GM12878 (cell line): ENCODE measurements at regions of chr5 and their contacts with region 1.

Region 1: DNA sequence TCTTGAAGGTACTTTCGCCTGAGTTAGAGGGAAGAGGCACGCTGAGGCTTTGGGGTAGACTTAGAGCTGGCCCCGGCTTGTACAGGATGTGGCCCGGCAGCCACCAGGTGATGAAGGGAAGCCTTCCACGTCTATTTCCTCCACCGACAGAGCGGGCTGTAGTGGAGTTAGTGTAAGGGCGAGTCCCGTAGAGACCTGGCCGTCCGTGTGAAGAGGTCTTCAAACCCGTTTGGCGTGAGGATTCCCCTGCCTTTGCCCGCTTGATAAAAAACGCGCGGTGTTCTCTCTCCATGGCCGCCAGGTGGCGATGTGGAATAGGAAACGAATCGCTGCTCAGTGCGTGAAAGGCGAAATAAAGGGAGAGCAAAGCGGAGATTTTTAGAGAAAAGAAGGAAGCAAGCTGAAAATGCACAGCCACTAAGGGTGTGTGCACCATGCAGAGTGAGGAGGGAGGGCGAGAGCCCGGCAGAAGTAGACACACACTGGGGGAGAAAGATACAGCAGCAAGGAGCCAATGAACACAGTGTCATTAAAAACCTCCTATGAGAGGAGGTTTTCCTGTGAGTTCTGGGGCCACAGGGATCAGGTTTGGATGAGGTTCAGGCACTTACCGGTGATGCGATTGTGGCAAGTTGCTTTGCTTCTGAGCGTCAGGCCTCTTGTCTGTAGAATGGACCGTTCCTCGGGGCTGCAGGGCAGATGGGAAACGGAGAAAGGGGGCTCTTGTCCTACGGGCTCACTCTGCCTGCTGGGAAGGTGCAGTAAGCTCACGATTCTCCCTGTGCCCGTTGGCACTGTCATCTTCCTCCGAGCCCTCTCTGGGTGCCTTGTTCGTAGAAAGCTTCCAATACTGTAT is 34.2 kb downstream of the STC2 start:
- DNase-seq: peak; percentile 35
- ATAC-seq: peak; percentile 88
- H3K4me3 ChIP-seq: peak overlapping the region; percentile 28; the same call in 1 of the 2 replicates
- H3K27ac ChIP-seq: 0 out of 2 replicates have a peak overlapping the region, but pooled peaks have one; percentile 41
- H3K4me1 ChIP-seq: peaks cover 26% of the 10 kb centered on the region
- H3K27me3 ChIP-seq: peaks cover 0 to 2% of the 10 kb centered on the region in 2 experiments; a peak in 2 of 4 replicates
- CTCF ChIP-seq: peak; percentile 78 to 92 (median 86)
- EP300 ChIP-seq: no peak
- POLR2A ChIP-seq: no peak
- RAD21 ChIP-seq: peak; percentile 89

Region 2: DNA sequence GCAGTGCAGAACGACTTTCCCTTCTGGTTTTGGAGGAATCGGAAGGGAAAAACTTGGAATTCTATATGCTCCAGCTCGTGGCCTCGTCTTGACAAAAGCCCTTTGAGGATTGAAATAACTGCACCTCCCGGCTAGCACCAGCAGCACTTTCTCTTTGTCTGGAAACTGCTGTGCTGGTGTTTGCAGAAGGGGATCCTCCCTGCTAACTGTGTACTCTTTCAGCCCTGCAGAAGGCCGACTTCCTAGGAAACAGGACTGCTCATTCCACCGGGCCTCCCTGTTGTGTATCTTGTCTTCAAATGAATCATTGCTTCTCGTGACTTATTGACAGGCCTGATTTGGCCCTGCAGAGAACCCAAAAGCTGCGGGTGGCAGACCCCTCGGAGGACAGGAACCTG is 10.5 kb after region 1 on chr5:
- CTCF ChIA-PET with region 1: interaction called, 12 read pairs
- POLR2A ChIA-PET with region 1: no interaction called
- RAD21 ChIA-PET with region 1: no interaction called
- SMC1A ChIA-PET with region 1: interaction called, 4 read pairs
- in situ Hi-C with region 1: no loop called
- intact Hi-C with region 1: no loop called
- DNase-seq: no peak
- ATAC-seq: no peak
- H3K4me3 ChIP-seq: no peak overlapping the region
- H3K27ac ChIP-seq: no peak overlapping the region
- H3K4me1 ChIP-seq: no peaks in the 10 kb centered on the region
- H3K27me3 ChIP-seq: no peaks in the 10 kb centered on the region; a peak in 3 of 4 replicates
- CTCF ChIP-seq: no peak
- EP300 ChIP-seq: no peak
- POLR2A ChIP-seq: no peak
- RAD21 ChIP-seq: no peak

Region 3: GRCh38 chr5:173331956-173332479 is 38.0 kb after region 1 on chr5:
- CTCF ChIA-PET with region 1: interaction called, 79 read pairs
- POLR2A ChIA-PET with region 1: interaction called, 3 read pairs
- RAD21 ChIA-PET with region 1: interaction called, 22 read pairs
- SMC1A ChIA-PET with region 1: interaction called, 29 read pairs
- in situ Hi-C with region 1: loop called (anchors 5 kb)
- intact Hi-C with region 1: loop called (anchors 1 kb)
- DNase-seq: peak; percentile 42
- ATAC-seq: peak; percentile 98
- H3K4me3 ChIP-seq: no peak overlapping the region
- H3K27ac ChIP-seq: no peak overlapping the region
- H3K4me1 ChIP-seq: no peaks in the 10 kb centered on the region; the same call in 1 of the 2 replicates
- H3K27me3 ChIP-seq: peaks cover 0 to 2% of the 10 kb centered on the region in 2 experiments; a peak in 2 of 4 replicates
- CTCF ChIP-seq: peak; percentile 88 to 94 (median 92)
- EP300 ChIP-seq: no peak
- POLR2A ChIP-seq: no peak
- RAD21 ChIP-seq: peak; percentile 88

Region 4: DNA sequence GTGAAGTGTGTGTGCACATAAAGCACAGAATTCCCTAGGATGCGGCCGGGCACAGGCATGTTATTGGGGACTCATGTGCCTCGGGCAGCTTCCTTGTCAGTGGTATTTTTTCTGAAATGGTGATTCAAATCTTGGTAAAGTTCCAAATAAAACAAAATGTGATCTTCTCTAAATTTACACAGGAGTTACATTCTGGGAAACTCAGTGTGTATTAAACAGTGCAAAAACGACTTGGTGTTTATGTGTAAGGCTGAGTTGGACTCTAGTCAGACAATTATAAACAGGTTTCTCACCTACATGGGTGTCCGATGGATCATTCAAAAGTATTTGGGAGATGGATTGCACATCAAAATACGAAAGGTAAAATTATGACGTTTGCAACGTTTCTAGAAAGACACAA is 273.5 kb after region 1 on chr5:
- CTCF ChIA-PET with region 1: interaction called, 16 read pairs
- POLR2A ChIA-PET with region 1: no interaction called
- RAD21 ChIA-PET with region 1: interaction called, 6 read pairs
- SMC1A ChIA-PET with region 1: interaction called, 3 read pairs
- in situ Hi-C with region 1: loop called (anchors 5 kb)
- intact Hi-C with region 1: no loop called
- DNase-seq: no peak
- ATAC-seq: no peak
- H3K4me3 ChIP-seq: no peak overlapping the region
- H3K27ac ChIP-seq: no peak overlapping the region
- H3K4me1 ChIP-seq: no peaks in the 10 kb centered on the region
- H3K27me3 ChIP-seq: peaks cover 0 to 2% of the 10 kb centered on the region in 2 experiments; a peak in 1 of 4 replicates
- CTCF ChIP-seq: no peak
- EP300 ChIP-seq: no peak
- POLR2A ChIP-seq: no peak
- RAD21 ChIP-seq: no peak

Region 5: DNA sequence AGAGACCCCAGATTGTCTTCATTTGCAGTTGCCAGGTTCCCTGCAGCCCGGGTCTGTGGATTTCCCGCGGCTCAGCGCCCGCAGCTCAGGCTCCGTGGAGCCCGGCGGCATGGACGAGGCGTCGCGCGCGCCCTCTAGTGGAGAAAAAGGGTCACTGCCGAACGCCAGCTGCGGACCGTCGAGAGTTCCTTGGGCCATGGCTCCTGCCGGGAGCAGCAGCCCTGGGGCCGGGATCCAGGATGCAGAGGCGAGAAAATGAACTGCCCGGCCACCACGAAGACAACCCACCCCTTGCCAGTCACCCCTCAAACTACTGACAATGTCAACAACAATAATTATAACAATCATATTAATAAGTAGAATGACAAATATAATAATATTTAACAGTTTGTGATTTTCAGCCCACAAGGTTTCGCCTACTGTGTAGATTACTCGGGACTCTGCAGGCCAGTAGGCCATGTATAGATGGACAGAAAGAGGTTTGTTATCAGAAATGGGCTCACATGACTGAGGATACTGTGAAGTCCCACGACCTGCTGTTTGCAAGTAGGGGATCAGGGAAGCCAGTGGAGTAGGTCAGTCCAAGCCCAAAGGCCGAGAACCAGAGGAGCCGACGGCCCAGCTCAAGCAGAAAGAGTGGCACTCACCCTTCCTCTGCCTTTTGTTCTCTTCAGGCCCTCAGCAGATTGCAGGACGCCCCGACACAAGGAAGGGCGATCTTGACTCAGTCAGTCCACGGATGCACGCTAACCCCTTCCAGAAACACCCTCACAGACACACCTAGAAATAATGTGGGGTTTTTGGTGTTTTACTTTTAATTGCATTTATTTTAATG is 279.3 kb after region 1 on chr5:
- CTCF ChIA-PET with region 1: interaction called, 16 read pairs
- POLR2A ChIA-PET with region 1: no interaction called
- RAD21 ChIA-PET with region 1: interaction called, 7 read pairs
- SMC1A ChIA-PET with region 1: interaction called, 3 read pairs
- in situ Hi-C with region 1: loop called (anchors 5 kb)
- intact Hi-C with region 1: loop called (anchors 1 kb)
- DNase-seq: no peak
- ATAC-seq: peak; percentile 98
- H3K4me3 ChIP-seq: no peak overlapping the region
- H3K27ac ChIP-seq: no peak overlapping the region
- H3K4me1 ChIP-seq: no peaks in the 10 kb centered on the region
- H3K27me3 ChIP-seq: no peaks in the 10 kb centered on the region; a peak in 1 of 4 replicates
- CTCF ChIP-seq: peak; percentile 81 to 96 (median 87)
- EP300 ChIP-seq: no peak
- POLR2A ChIP-seq: no peak
- RAD21 ChIP-seq: peak; percentile 79

Region 6: GRCh38 chr5:173972925-173973615 is 679.0 kb after region 1 on chr5:
- CTCF ChIA-PET with region 1: interaction called, 3 read pairs
- POLR2A ChIA-PET with region 1: no interaction called
- RAD21 ChIA-PET with region 1: no interaction called
- SMC1A ChIA-PET with region 1: no interaction called
- in situ Hi-C with region 1: no loop called
- intact Hi-C with region 1: loop called (anchors 10 kb)
- DNase-seq: peak; percentile 40
- ATAC-seq: peak; percentile 92
- H3K4me3 ChIP-seq: peak overlapping the region; percentile 66
- H3K27ac ChIP-seq: no peak overlapping the region
- H3K4me1 ChIP-seq: peaks cover 12% of the 10 kb centered on the region
- H3K27me3 ChIP-seq: no peaks in the 10 kb centered on the region
- CTCF ChIP-seq: peak; percentile 77 to 88 (median 82); a peak in 5 of 6 replicates
- EP300 ChIP-seq: no peak
- POLR2A ChIP-seq: no peak
- RAD21 ChIP-seq: peak; percentile 84